Mammary epithelial cell (primary cell): ENCODE measurements at regions of chr9 and their contacts with region 1.

Region 1: DNA sequence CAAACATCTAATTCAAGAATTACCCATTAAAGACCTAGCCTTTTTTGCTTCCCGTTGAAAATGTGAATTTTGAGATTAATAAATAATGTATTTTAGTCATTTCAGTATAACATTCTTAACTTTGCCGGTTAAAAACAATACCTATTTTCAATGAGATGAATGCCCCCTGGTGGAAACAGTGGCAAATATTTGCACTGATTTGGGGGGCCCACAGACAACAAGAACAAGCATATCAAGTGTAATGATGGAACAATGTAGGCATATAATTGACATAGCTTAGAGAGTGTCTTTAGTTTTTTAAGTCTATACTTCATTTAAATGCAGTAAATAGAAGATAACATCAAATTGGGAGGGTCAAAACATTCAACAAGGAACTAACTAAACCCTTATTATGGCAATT is 111.9 kb downstream of the NTRK2 start:
- DNase-seq: peak; percentile 13
- H3K4me3 ChIP-seq: no peak overlapping the region
- H3K27ac ChIP-seq: no peak overlapping the region
- H3K4me1 ChIP-seq: no peaks in the 10 kb centered on the region
- H3K27me3 ChIP-seq: no peaks in the 10 kb centered on the region
- CTCF ChIP-seq: peak; percentile 55

Region 2: DNA sequence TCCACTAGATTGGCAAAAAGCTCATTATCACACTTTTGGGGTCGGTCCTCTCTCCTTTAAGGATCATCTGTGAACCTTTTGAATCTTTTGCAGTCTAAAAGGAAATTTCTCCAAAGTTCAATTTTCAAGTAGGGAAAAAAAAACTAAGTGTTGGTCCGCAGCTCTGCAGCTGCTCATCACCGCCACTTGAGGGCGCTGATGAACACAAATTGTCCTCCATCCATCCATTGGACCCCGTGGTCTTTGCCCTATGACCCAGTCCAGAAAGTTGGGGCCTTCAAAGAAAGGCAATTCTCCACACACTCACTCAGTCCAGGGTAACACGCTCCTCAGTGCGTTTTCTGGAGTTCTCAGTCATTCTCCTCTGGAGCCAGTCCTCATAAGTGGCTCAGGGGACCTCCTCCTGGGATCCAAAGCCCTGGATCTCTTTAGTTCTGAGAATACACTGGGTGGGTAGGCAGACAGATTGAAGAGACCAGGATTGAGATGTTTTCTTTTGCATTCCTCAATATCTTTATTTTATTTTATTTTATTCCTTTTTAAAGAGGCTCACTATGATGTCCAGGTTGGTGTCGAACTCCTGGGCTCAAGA is 377.3 kb before region 1 on chr9:
- CTCF ChIA-PET with region 1: no interaction called
- dilution Hi-C with region 1: no loop called
- in situ Hi-C with region 1: no loop called
- intact Hi-C with region 1: loop called (anchors 2 kb)
- DNase-seq: no peak
- H3K4me3 ChIP-seq: no peak overlapping the region
- H3K27ac ChIP-seq: no peak overlapping the region
- H3K4me1 ChIP-seq: no peaks in the 10 kb centered on the region
- H3K27me3 ChIP-seq: no peaks in the 10 kb centered on the region
- CTCF ChIP-seq: peak; percentile 57 to 76

Region 3: DNA sequence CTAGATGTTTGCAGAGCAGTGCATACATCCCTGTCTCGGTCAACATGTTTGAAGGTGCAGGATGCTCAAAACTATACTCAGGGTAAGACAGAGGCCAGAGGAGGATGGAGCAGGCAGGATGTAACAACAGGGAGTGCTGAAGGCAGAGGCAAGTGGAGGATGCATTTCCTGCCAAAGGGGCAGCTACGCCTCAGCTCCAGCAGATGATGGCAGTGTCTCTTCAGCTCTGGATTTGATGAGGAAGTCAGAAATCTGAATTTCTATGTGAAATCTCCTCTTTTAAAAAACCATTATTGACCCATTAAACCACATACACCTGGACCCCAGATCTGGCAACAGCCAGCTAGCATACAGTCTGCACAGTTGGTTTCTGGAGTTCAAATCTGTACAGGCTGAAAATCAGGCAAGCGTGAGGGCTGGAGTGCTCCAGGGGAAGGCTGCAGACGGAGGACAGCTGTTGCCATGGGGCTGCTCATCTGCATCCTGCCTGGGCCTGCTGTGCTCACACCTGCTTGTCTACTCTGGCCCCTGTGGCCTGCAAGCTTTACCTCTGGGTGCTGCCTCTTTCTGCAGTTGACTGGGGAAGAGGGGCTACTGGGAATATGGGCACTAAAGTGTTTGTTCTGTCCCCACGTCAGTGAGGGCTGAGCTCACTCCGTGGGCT is 288.0 kb before region 1 on chr9:
- CTCF ChIA-PET with region 1: no interaction called
- dilution Hi-C with region 1: no loop called
- in situ Hi-C with region 1: no loop called
- intact Hi-C with region 1: loop called (anchors 5 kb)
- DNase-seq: no peak
- H3K4me3 ChIP-seq: no peak overlapping the region
- H3K27ac ChIP-seq: no peak overlapping the region
- H3K4me1 ChIP-seq: no peaks in the 10 kb centered on the region
- H3K27me3 ChIP-seq: no peaks in the 10 kb centered on the region
- CTCF ChIP-seq: peak in 1 of 2 donors; percentile 11

Region 4: DNA sequence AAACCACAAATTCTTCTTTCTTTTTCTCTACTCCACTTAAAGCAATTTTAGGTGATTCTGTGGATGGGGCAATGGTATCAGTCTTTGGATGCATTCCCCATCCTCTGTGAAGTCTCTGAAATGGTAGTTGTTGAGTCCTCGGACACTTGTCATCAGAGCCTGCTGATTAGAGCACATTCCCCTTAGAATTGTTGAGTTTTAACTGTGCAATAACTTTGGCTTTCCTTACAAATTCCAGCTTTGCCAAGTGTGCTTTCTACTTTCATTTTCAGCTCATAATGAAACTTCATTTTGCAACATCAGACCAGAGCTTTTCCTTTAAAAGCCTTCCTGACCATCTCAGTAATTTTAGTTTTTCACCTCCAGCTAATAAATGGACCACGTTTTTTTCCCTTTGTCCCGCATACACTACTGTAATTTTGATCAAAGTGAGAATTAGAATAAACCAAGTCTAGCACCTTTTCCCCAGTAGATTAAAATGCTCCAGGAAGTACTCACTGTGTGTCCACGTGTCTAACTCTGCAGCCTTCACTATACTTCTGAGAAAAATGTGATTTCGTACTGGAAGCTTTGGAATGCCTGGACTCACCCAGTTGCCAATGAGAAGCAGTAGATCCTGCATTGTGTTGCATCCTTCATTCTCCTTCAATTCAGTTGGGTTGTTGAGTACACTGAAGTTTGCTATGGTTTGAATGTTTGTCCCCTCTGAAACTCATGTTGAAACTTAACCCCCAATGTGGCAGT is 23.7 kb after region 1 on chr9:
- CTCF ChIA-PET with region 1: no interaction called
- dilution Hi-C with region 1: no loop called
- in situ Hi-C with region 1: no loop called
- intact Hi-C with region 1: no loop called
- DNase-seq: no peak
- H3K4me3 ChIP-seq: no peak overlapping the region
- H3K27ac ChIP-seq: no peak overlapping the region
- H3K4me1 ChIP-seq: no peaks in the 10 kb centered on the region
- H3K27me3 ChIP-seq: no peaks in the 10 kb centered on the region
- CTCF ChIP-seq: no peak

Region 5: GRCh38 chr9:84953797-84954705 is 172.6 kb after region 1 on chr9:
- CTCF ChIA-PET with region 1: no interaction called
- dilution Hi-C with region 1: no loop called
- in situ Hi-C with region 1: no loop called
- intact Hi-C with region 1: loop called (anchors 2 kb)
- DNase-seq: peak; percentile 73
- H3K4me3 ChIP-seq: no peak overlapping the region
- H3K27ac ChIP-seq: peak overlapping the region; percentile 67
- H3K4me1 ChIP-seq: peaks cover 14% of the 10 kb centered on the region
- H3K27me3 ChIP-seq: no peaks in the 10 kb centered on the region
- CTCF ChIP-seq: peak; percentile 99

Region 6: GRCh38 chr9:85425153-85425611 is 643.7 kb after region 1 on chr9:
- CTCF ChIA-PET with region 1: no interaction called
- dilution Hi-C with region 1: no loop called
- in situ Hi-C with region 1: no loop called
- intact Hi-C with region 1: loop called (anchors 10 kb)
- DNase-seq: peak; percentile 27
- H3K4me3 ChIP-seq: no peak overlapping the region
- H3K27ac ChIP-seq: no peak overlapping the region
- H3K4me1 ChIP-seq: no peaks in the 10 kb centered on the region
- H3K27me3 ChIP-seq: no peaks in the 10 kb centered on the region
- CTCF ChIP-seq: peak; percentile 62 to 79